GM12878 (cell line): ENCODE measurements at regions of chr18 and their contacts with region 1.

Region 1: GRCh38 chr18:10304853-10305252 is 149.6 kb upstream of the APCDD1 start:
- DNase-seq: no peak
- ATAC-seq: no peak
- H3K4me3 ChIP-seq: no peak overlapping the region
- H3K27ac ChIP-seq: no peak overlapping the region
- H3K4me1 ChIP-seq: no peaks in the 10 kb centered on the region
- H3K27me3 ChIP-seq: no peaks in the 10 kb centered on the region
- CTCF ChIP-seq: no peak
- EP300 ChIP-seq: no peak
- POLR2A ChIP-seq: no peak
- RAD21 ChIP-seq: no peak

Region 2: DNA sequence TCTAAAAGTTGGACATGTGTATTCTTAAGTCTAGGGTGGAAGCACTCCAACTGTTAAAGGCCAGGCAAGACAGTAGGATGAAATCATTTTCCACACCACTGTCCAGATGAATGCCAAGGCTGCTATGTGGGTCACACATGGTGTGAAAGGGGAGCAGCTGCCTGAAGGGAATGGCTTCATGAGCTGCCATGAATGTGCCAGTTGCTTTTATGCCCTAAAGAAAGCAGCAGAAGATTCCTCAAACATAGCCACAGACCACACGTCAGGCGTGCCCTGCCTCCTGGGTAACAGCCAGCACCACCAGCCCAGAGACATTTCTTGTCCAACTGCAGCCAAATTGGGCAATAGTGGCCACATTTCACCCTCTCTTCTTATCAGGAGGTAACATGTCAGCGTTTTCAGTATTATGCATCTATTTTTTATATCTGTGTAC is 1469.3 kb before region 1 on chr18:
- CTCF ChIA-PET with region 1: no interaction called
- POLR2A ChIA-PET with region 1: no interaction called
- RAD21 ChIA-PET with region 1: no interaction called
- SMC1A ChIA-PET with region 1: no interaction called
- in situ Hi-C with region 1: loop called (anchors 25 kb)
- intact Hi-C with region 1: no loop called
- DNase-seq: no peak
- ATAC-seq: no peak
- H3K4me3 ChIP-seq: no peak overlapping the region
- H3K27ac ChIP-seq: no peak overlapping the region
- H3K4me1 ChIP-seq: no peaks in the 10 kb centered on the region
- H3K27me3 ChIP-seq: 0 out of 4 replicates have a peak, but pooled peaks cover 0 to 3% of the 10 kb centered on the region in 2 experiments
- CTCF ChIP-seq: no peak
- EP300 ChIP-seq: no peak
- POLR2A ChIP-seq: no peak
- RAD21 ChIP-seq: no peak

Region 3: DNA sequence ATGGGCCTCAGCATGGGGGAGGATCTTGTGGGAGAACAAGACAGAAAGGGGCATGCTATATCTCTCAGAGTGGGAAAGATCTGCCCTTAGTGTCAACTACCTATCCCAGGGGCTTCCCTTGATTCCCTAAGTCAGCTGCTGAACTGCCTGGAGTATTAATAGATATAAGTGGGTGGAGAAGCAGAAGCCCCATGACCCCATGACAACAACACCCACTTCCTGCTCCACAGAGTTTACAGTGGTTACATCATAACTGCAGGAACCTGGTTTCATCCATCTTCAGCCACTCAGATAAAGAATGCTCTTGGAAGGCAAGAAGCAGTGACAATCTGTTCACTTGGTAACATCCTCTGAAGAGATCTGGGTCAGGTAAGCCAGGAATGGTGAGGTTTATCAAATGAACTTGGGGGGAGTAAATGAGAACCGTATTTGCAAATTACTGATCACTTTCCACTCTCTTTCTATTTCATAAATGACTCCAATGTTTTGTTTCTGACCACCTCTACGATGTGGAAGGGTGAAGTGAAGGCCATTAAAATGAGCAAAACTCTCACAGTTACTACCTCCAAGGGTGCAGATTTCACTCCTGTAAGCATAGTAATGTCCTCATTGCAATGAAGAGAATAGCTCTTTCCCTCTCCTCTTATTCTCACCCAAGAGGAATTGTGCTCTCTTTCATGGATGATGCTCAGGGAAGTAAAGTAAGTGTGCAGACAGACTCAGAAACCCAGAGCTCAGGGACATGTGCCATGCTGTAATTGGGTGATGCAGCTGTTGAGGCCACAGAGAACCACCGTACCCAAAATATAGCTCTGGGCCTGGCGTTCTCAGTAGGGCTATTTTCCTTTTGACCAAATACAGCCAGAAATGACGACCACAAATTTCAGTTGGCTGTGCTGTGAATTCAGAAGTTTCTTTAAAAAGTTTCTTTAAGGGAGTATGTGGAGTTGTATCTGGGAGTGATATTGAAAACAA is 43.3 kb before region 1 on chr18:
- CTCF ChIA-PET with region 1: no interaction called
- POLR2A ChIA-PET with region 1: no interaction called
- RAD21 ChIA-PET with region 1: no interaction called
- SMC1A ChIA-PET with region 1: no interaction called
- in situ Hi-C with region 1: loop called (anchors 5 kb)
- intact Hi-C with region 1: no loop called
- DNase-seq: no peak
- ATAC-seq: no peak
- H3K4me3 ChIP-seq: no peak overlapping the region
- H3K27ac ChIP-seq: no peak overlapping the region
- H3K4me1 ChIP-seq: peaks cover 4% of the 10 kb centered on the region
- H3K27me3 ChIP-seq: no peaks in the 10 kb centered on the region
- CTCF ChIP-seq: no peak
- EP300 ChIP-seq: no peak
- POLR2A ChIP-seq: no peak
- RAD21 ChIP-seq: no peak